ENCODE measurements at regions of chr1 and their contacts with region 1.

Region 1: GRCh38 chr1:16151200-16151994 is 4.5 kb downstream of the EPHA2 start:
- DNase-seq: no peak
- H3K4me3 ChIP-seq: no peak overlapping the region
- H3K27ac ChIP-seq: peak overlapping the region; percentile 29 to 41
- H3K4me1 ChIP-seq: peaks cover 0 to 70% (median 49%) of the 10 kb centered on the region in 4 donors
- H3K27me3 ChIP-seq: no peaks in the 10 kb centered on the region
- CTCF ChIP-seq: no peak

Region 2: GRCh38 chr1:16187748-16188401 is 36.5 kb after region 1 on chr1:
- intact Hi-C with region 1: loop called (anchors 5 kb)
- DNase-seq: peak; percentile 71 to 86
- H3K4me3 ChIP-seq: no peak overlapping the region
- H3K27ac ChIP-seq: no peak overlapping the region
- H3K4me1 ChIP-seq: peaks cover 0 to 52% (median 7%) of the 10 kb centered on the region in 4 donors
- H3K27me3 ChIP-seq: peaks cover 0 to 13% of the 10 kb centered on the region in 2 donors
- CTCF ChIP-seq: peak; percentile 98 to 99